GM23248 (cell line): ENCODE measurements at regions of chr4 and their contacts with region 1.

Region 1: DNA sequence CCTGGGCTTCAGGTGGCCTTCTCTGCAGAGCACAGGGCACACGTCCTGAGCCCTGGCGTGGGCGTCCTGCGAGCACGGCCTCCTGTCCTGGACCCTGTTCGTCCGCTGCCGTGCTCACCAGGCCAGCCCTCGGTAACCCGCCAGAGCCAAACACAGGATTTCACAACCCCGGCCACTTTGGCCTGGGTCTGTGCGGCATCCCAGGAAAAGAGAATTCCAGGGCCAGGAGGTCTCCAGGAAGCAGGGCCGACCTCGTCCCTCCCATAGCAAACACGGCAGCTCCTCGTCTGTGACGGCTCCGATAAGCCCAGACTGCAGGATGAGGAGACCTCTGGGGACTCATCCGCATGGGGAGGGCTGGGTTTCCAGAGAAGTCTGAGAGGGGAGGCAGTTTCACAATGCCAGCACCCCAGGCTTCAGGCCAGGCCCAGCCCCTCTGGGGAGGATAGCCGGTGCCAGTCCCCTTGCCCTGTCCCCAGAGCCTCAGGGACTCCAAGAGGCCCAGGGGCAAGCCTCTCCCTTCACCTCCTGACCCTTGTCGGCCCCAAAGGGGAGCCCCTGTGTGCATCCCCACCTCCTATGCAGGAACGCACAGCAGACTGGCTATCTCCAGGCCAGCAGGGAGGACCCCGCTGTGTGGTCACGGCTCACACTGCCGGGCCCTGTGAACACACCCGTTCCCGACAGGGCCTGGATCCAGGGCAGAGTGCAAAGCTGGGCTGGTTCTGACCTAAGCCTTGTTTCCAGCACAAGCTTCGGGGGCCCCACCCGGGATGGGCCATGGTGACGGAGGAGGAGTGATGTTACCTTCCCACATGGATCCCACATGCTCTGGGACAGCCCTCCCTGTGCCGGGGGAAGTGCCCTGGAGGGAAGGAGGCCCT is 22.3 kb upstream of the HTRA3 start:
- DNase-seq: peak; percentile 21
- H3K4me3 ChIP-seq: no peak overlapping the region
- H3K27ac ChIP-seq: no peak overlapping the region
- H3K4me1 ChIP-seq: no peaks in the 10 kb centered on the region
- H3K27me3 ChIP-seq: no peaks in the 10 kb centered on the region

Region 2: GRCh38 chr4:7649741-7650531 is 597.4 kb before region 1 on chr4:
- in situ Hi-C with region 1: no loop called
- DNase-seq: peak; percentile 84
- H3K4me3 ChIP-seq: no peak overlapping the region
- H3K27ac ChIP-seq: peak overlapping the region; percentile 37
- H3K4me1 ChIP-seq: peaks cover 20% of the 10 kb centered on the region
- H3K27me3 ChIP-seq: no peaks in the 10 kb centered on the region

Region 3: GRCh38 chr4:8117278-8117682 is 130.0 kb before region 1 on chr4:
- in situ Hi-C with region 1: no loop called
- DNase-seq: peak; percentile 56
- H3K4me3 ChIP-seq: no peak overlapping the region
- H3K27ac ChIP-seq: no peak overlapping the region
- H3K4me1 ChIP-seq: no peaks in the 10 kb centered on the region
- H3K27me3 ChIP-seq: peaks cover 33% of the 10 kb centered on the region

Region 4: GRCh38 chr4:8403173-8403753 is 156.0 kb after region 1 on chr4:
- in situ Hi-C with region 1: loop called (anchors 5 kb)
- DNase-seq: peak; percentile 91
- H3K4me3 ChIP-seq: no peak overlapping the region
- H3K27ac ChIP-seq: no peak overlapping the region
- H3K4me1 ChIP-seq: no peaks in the 10 kb centered on the region
- H3K27me3 ChIP-seq: no peaks in the 10 kb centered on the region